ENCODE measurements at regions of chr22 and their contacts with region 1.

Region 1: DNA sequence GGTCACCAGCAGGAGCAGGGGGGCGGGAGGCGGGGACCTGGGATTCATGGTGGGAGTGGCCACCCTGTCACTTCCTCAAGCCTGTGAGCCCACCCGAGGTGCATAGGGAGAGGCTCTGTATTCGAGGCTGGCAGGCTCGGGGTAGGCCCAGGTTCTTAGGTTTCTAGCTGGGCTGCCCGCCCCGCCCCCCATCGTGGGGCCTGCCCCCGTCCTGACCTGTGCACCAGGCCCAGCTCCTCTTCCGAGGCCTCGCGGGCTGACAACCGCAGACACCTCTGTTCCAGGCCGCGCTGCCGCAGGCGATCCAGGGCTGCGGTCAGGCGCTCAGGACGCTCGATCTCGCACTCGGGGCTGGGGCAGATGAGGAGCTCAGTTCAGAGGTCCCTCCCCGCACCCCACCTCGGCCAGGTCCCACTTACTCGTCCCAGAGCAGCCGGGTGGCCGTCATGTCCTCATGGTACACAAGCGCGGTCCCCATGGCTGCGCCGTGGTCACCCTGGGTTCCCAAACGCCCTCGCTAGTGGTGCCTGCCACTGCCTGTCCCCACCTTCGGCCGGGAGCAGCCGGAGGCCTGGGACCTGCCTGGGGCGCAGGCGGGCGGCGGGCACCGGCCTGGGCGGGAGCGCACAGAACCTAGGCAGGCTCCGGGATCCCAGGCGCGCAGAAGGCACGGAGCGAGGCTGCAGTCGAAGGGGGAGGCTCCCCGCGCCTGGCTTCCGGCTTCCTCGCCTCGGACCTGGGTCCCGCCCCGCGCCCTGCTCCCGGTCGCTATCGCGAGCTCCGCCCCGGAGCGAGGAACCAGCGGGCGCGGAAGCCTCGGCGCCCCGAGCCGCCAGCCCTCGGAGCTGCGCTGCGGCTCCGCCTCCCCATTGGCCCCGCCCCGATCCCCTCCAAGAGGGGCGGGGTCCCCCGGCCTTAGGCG is at the start of gene HDAC10:
- DNase-seq: peak; percentile 91
- H3K4me3 ChIP-seq: peak within 1 kb of the TSS; percentile 81
- H3K27ac ChIP-seq: peak within 1 kb of the TSS; percentile 62
- H3K4me1 ChIP-seq: peaks cover 49% of the 10 kb centered on the region
- CTCF ChIP-seq: no peak
- total RNA-seq, gene HDAC10: 47.4 and 49.4 TPM in 2 replicates

Region 2: GRCh38 chr22:50085211-50085972 is 165.4 kb before region 1 on chr22 and contains the start of gene MLC1:
- CTCF ChIA-PET with region 1: no interaction called
- POLR2A ChIA-PET with region 1: no interaction called
- intact Hi-C with region 1: no loop called
- DNase-seq: no peak
- H3K4me3 ChIP-seq: no peak within 1 kb of the TSS
- H3K27ac ChIP-seq: no peak within 1 kb of the TSS
- H3K4me1 ChIP-seq: no peaks in the 10 kb centered on the region
- CTCF ChIP-seq: no peak
- total RNA-seq, gene MLC1: 0.16 TPM in 1 of 2 replicates, not detected in the other

Region 3: GRCh38 chr22:50341977-50342650 is 91.3 kb after region 1 on chr22:
- CTCF ChIA-PET with region 1: interaction called, 3 read pairs
- POLR2A ChIA-PET with region 1: no interaction called
- intact Hi-C with region 1: loop called (anchors 5 kb)
- DNase-seq: peak; percentile 88
- H3K4me3 ChIP-seq: peak overlapping the region; percentile 100
- H3K27ac ChIP-seq: peak overlapping the region; percentile 72
- H3K4me1 ChIP-seq: peaks cover 20% of the 10 kb centered on the region
- CTCF ChIP-seq: peak; percentile 99

Region 4: DNA sequence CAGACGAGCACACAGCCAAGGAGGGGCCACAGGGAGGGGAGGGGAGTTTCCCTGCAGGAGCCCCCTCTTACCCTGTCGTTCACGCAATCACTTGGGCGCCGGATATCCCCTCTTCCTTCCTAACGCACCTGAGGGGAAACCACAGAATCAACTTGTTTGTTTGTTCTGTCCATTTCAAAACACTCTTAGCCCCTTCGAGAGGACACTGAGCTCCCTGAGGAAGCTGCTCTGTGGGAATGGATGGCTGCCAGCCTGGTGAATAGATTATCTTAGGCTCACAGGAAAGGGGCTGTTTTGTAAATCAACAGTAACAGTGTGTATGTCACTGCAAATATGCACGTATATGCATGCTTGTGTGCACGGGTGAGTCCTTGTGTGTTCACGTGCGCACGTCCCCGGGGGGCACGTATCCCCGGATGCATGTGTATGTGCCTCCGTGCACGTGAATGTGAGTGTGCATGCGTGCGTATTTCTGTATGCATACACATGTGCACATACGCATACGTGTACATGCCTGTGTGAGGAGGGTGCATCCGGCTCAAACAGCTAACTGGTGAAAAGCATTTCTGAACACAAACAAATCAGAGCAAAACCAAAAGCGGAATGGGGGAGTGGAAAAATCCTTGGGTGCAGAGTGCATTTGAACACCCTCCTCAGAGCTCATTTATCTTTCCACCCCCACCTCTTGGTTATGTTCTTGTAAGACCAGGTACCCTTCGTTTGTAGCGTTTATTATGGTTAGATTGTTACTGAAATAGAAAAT is 370.0 kb after region 1 on chr22:
- CTCF ChIA-PET with region 1: interaction called, 3 read pairs
- POLR2A ChIA-PET with region 1: no interaction called
- intact Hi-C with region 1: loop called (anchors 5 kb)
- DNase-seq: peak; percentile 92
- H3K4me3 ChIP-seq: peak overlapping the region; percentile 67
- H3K27ac ChIP-seq: peak overlapping the region; percentile 82
- H3K4me1 ChIP-seq: peaks cover 37% of the 10 kb centered on the region
- CTCF ChIP-seq: no peak; the same call in 1 of the 2 replicates